ENCODE measurements at regions of chr6 and their contacts with region 1.

Region 1: DNA sequence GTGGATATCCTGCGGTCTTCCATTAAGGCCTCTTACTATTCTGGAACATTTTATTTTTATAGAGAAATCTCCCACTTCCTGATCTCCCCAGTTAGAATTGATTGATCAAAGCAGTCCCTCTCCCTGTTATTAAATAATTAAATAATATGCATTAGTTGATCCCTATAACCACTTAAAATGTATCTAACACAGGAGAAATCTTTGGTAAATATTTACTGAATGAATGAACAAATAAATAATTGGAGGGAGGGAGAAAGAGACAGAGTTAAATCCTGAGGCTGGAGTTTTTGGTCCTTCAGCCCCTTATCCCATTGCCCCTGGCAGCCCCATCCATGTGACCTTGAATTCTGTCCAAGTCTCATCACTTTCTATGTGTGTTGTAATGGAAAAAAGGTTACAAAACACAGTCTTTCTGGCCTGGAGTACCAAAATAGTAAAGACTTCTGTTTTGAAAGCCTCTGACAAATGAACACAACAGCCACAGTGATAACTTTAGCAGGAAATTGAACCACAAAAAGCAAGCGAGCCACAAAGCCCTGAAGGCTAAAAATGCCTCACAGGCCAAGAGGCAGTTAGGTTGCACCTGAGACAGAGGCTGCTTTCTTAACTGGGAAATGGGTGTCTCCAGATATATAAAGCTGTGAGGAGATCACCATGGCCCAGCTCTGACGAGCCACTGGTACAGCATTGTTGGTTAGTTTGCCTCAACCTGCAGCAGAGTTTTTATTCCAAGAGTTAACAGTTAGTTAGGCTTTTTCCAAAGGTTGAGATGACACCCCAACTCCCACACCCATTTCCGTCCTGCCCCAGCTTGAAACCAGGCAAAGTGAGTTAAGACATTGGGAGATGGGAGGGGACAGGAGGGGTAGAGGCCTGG is 11.3 kb downstream of the NT5E start:
- DNase-seq: peak; percentile 64
- H3K4me3 Mint-ChIP-seq: peak overlapping the region; percentile 57
- H3K27ac Mint-ChIP-seq: peak overlapping the region; percentile 89
- H3K4me1 Mint-ChIP-seq: peaks cover 98% of the 10 kb centered on the region
- H3K27me3 Mint-ChIP-seq: no peaks in the 10 kb centered on the region

Region 2: DNA sequence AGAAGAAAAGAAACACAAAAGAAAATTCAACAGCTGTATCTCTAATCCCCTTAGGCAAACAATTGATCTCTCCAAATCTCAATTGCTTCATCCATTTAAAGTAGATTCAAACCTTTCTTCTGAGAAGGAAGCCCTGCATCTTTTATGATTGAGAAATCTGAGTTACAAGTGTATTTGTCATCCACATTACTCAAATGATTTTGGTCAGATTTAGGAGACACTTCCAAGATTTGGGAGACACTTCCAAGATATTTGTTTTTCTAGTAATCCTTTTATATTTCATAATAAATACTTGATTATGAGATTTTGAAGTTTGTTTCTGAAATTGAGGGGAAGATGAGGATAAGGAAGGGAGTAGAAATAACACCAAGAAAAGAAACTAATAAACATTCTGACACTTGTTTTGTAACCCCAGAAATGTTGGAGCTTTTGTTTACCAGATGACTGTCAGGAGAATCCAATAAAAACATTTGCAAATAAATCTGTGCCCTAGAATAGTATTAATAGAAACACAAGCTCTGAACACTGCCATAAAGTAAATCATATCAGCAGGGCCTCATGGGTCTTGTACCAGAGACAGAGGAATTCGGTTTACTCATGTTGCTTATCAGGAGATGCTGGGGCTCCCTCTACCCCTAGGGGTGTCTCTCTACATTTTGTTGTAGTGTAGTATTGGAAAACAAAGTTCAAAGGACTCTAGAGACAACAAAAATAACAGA is 325.6 kb before region 1 on chr6:
- intact Hi-C with region 1: no loop called
- DNase-seq: no peak
- H3K4me3 Mint-ChIP-seq: no peak overlapping the region
- H3K27ac Mint-ChIP-seq: no peak overlapping the region
- H3K4me1 Mint-ChIP-seq: no peaks in the 10 kb centered on the region
- H3K27me3 Mint-ChIP-seq: peaks cover 2% of the 10 kb centered on the region

Region 3: GRCh38 chr6:85360794-85361642 is 100.1 kb before region 1 on chr6:
- intact Hi-C with region 1: loop called (anchors 1 kb)
- DNase-seq: no peak
- H3K4me3 Mint-ChIP-seq: no peak overlapping the region
- H3K27ac Mint-ChIP-seq: peak overlapping the region; percentile 35
- H3K4me1 Mint-ChIP-seq: peaks cover 26% of the 10 kb centered on the region
- H3K27me3 Mint-ChIP-seq: peaks cover 2% of the 10 kb centered on the region

Region 4: GRCh38 chr6:85419046-85419759 is 42.0 kb before region 1 on chr6:
- intact Hi-C with region 1: loop called (anchors 1 kb)
- DNase-seq: no peak
- H3K4me3 Mint-ChIP-seq: no peak overlapping the region
- H3K27ac Mint-ChIP-seq: no peak overlapping the region
- H3K4me1 Mint-ChIP-seq: peaks cover 38% of the 10 kb centered on the region
- H3K27me3 Mint-ChIP-seq: peaks cover 6% of the 10 kb centered on the region

Region 5: GRCh38 chr6:85482905-85483700 is 21.9 kb after region 1 on chr6:
- intact Hi-C with region 1: loop called (anchors 1 kb)
- DNase-seq: peak; percentile 70
- H3K4me3 Mint-ChIP-seq: no peak overlapping the region
- H3K27ac Mint-ChIP-seq: no peak overlapping the region
- H3K4me1 Mint-ChIP-seq: peaks cover 17% of the 10 kb centered on the region
- H3K27me3 Mint-ChIP-seq: no peaks in the 10 kb centered on the region

Region 6: GRCh38 chr6:85516168-85516567 is 55.0 kb after region 1 on chr6:
- intact Hi-C with region 1: no loop called
- DNase-seq: no peak
- H3K4me3 Mint-ChIP-seq: no peak overlapping the region
- H3K27ac Mint-ChIP-seq: no peak overlapping the region
- H3K4me1 Mint-ChIP-seq: no peaks in the 10 kb centered on the region
- H3K27me3 Mint-ChIP-seq: no peaks in the 10 kb centered on the region

Region 7: DNA sequence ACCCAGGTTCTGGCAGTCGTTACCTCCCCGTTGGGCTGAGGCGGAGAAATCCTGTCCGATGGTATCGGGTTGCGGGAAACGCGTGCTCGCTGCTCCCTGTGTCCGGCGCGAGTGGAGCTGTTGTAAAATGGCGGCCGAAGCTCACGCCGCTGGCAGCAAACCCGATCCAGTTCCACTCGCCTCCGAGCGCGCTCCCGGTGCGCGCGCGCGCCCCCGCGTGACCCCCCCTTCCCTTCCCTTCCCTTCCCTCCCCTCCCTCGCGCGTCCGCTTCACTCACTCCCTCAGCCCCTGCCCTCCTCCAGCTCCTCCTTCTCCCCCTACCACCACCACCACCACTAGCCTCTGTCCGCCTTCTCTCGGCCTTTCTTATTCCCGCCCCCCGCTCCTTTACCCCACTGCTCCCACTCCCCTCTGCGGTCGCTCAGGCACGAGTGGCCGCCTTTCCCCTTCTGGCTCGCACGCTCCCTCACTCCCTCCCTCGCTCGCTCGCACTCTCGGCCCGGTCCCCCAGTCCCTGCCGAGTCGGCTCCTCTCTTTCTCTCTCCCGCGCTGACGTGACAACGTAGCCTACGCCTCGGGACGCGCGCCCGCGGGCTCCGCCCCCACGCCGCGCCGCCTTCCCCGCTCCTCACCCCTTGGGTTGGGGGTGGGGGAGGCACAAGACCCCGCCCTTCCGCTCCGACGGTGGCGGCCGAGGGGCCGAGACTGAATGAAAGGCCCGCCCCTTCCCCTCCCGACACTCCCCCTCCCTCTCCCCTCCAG is 181.8 kb after region 1 on chr6 and contains the start of gene SYNCRIP:
- intact Hi-C with region 1: loop called (anchors 5 kb)
- DNase-seq: peak; percentile 98
- H3K4me3 Mint-ChIP-seq: peak within 1 kb of the TSS; percentile 92
- H3K27ac Mint-ChIP-seq: peak within 1 kb of the TSS; percentile 99
- H3K4me1 Mint-ChIP-seq: peaks cover 47% of the 10 kb centered on the region
- H3K27me3 Mint-ChIP-seq: peaks cover 3% of the 10 kb centered on the region
- total RNA-seq, gene SYNCRIP: 207 and 217 TPM in 2 replicates

Measured in activated T-helper 1 cell treated with anti-CD3 and anti-CD28 coated beads, Interleukin-12 subunit alpha, Interleukin-12 subunit beta, Interleukin-2, Interleukin-4 antibody, amounts not matched to agents 30 ng/mL and 10 ng/mL and 1 ng/mL, durations not matched to agents 14 hours and 24 hours and 36 hours (primary cell).